Heart left ventricle (tissue), 16 donors: ENCODE measurements at regions of chr12 and their contacts with region 1.

Region 1: GRCh38 chr12:113325916-113326315 is 9.0 kb downstream of the SLC8B1 start:
- DNase-seq: peak; percentile 48 to 81 (median 68)
- ATAC-seq: peak in 3 of 4 donors; percentile 25 to 77 (median 55)
- H3K4me3 ChIP-seq: no peak overlapping the region
- H3K27ac ChIP-seq: peak overlapping the region in 11 of 12 donors; percentile 8 to 73 (median 56)
- H3K4me1 ChIP-seq: peaks cover 0 to 45% (median 19%) of the 10 kb centered on the region in 12 donors
- H3K27me3 ChIP-seq: no peaks in the 10 kb centered on the region
- CTCF ChIP-seq: no peak
- POLR2A ChIP-seq: no peak

Region 2: DNA sequence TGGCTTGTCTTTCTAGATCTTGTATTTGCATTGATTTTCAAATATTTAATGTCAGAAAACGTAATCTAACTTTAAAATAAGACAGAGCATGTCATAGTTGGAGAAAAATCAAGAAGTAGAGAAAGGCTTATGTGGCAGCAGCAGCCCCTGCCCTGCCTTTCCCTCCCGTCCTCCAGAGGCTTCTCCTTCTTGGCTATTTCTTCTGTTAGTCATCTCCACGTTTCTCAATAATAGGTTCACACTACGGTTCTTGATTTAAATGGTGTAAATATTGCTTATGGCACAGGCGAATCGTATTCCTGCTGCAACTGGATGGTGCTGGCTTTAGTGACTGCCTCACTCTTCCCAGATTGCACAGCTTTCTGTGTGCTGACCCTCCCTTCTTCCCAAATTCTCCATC is 33.8 kb before region 1 on chr12:
- intact Hi-C with region 1: no loop called
- DNase-seq: no peak
- ATAC-seq: no peak
- H3K4me3 ChIP-seq: no peak overlapping the region
- H3K27ac ChIP-seq: no peak overlapping the region
- H3K4me1 ChIP-seq: peaks cover 0 to 39% (median 6%) of the 10 kb centered on the region in 12 donors
- H3K27me3 ChIP-seq: no peaks in the 10 kb centered on the region
- CTCF ChIP-seq: no peak
- POLR2A ChIP-seq: no peak

Region 3: GRCh38 chr12:113341535-113341934 is 15.6 kb after region 1 on chr12:
- intact Hi-C with region 1: no loop called
- DNase-seq: no peak
- ATAC-seq: peak in 1 of 4 donors; percentile 38
- H3K4me3 ChIP-seq: no peak overlapping the region
- H3K27ac ChIP-seq: no peak overlapping the region
- H3K4me1 ChIP-seq: no peaks in the 10 kb centered on the region
- H3K27me3 ChIP-seq: no peaks in the 10 kb centered on the region
- CTCF ChIP-seq: no peak
- POLR2A ChIP-seq: no peak

Region 4: GRCh38 chr12:113366827-113367226 is 40.9 kb after region 1 on chr12:
- intact Hi-C with region 1: loop called in 1 of 10 experiments (anchors 5 kb)
- DNase-seq: peak in 2 of 5 donors; percentile 25 to 44
- ATAC-seq: peak; percentile 72 to 92 (median 84)
- H3K4me3 ChIP-seq: no peak overlapping the region
- H3K27ac ChIP-seq: peak overlapping the region in 9 of 12 donors; percentile 11 to 61 (median 48)
- H3K4me1 ChIP-seq: peaks cover 0 to 20% (median 11%) of the 10 kb centered on the region in 12 donors
- H3K27me3 ChIP-seq: no peaks in the 10 kb centered on the region
- CTCF ChIP-seq: no peak
- POLR2A ChIP-seq: no peak